MCF 10A (cell line): ENCODE measurements at regions of chr9 and their contacts with region 1.

Region 1: DNA sequence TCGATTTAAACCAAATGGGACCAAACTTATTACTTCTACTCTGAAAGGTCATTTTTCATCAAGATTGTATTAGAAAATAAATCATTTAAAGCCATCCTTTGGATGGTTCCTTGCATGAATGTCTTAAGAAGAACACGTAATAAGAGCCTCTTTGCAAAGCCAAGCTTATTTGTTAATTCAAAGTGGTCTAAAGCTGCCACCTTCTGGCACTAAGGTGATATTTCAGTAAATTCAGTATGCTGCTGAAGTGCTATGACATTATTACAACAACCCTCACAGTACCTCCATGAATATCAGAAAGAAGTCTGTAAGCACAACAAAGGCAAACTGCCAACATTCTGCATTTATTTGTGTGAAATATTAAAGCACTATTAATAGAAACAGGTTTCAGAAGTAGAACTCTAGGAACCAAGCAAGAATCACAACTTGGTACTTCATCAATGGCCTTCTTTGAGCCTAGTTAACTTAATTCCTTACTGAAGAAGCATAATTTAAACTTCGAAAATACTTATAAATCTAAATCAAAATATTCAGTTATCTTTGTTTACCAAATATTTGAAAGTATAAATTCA is 53.1 kb upstream of the TYRP1 start:
- DNase-seq: peak; percentile 56
- H3K4me3 Mint-ChIP-seq: no peak overlapping the region
- H3K27ac Mint-ChIP-seq: no peak overlapping the region
- H3K4me1 Mint-ChIP-seq: no peaks in the 10 kb centered on the region
- H3K27me3 Mint-ChIP-seq: peaks cover 78% of the 10 kb centered on the region
- CTCF ChIP-seq: peak; percentile 77

Region 2: DNA sequence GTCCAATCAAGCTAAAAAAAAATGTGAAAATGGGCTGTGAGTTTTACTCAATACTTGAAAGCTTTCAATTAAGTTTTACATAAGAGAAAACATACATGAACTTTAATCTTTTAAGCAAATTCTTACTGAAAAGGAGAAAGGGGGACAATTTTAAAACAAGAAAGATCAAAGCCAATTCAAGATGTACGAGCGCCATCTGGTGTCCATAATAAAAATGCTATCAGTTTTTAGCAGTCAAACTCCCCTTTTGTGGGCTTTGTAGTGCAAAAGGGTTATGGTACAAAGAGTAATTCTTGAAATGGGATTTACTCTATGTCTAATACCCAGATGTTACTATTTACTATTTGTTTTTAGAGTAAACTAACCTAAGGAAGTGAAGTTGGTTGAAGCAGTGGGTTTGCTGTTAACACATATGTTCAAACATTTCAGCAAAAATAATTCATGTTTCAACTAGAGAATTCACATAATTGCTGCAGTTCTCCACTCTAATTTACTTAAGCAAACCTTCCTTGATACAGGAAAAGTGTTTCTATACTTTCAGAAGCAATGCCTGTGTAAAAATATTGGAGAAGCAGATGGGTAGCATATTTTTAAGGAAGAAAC is 175.1 kb before region 1 on chr9:
- CTCF ChIA-PET with region 1: interaction called, 3 read pairs
- POLR2A ChIA-PET with region 1: no interaction called
- intact Hi-C with region 1: loop called (anchors 5 kb)
- DNase-seq: peak; percentile 38
- H3K4me3 Mint-ChIP-seq: no peak overlapping the region
- H3K27ac Mint-ChIP-seq: no peak overlapping the region
- H3K4me1 Mint-ChIP-seq: no peaks in the 10 kb centered on the region
- H3K27me3 Mint-ChIP-seq: peaks cover 83% of the 10 kb centered on the region
- CTCF ChIP-seq: peak; percentile 57

Region 3: DNA sequence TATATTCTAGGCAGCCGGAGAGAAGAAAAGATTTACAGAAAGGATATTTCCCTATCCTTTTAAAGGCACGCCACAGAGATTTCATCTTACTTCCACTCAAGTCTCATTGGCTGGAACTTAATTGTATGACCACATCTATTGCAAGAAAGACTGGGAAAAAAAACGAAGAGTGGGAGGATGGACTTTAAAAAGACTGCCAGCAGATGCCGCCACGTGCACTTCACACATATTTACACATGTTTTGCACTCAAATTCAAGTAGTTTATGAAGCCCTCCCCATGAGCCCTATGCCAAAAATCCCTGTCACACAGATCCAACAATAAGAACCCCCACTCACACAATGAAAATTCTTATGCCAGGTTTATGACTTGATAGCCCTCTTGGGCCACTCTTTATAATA is 85.5 kb before region 1 on chr9:
- CTCF ChIA-PET with region 1: interaction called, 5 read pairs
- POLR2A ChIA-PET with region 1: no interaction called
- intact Hi-C with region 1: loop called (anchors 2 kb)
- DNase-seq: peak; percentile 20
- H3K4me3 Mint-ChIP-seq: no peak overlapping the region
- H3K27ac Mint-ChIP-seq: no peak overlapping the region
- H3K4me1 Mint-ChIP-seq: no peaks in the 10 kb centered on the region
- H3K27me3 Mint-ChIP-seq: peaks cover 48% of the 10 kb centered on the region
- CTCF ChIP-seq: peak; percentile 27

Region 4: GRCh38 chr9:12666813-12667212 is 26.7 kb after region 1 on chr9:
- CTCF ChIA-PET with region 1: no interaction called
- POLR2A ChIA-PET with region 1: no interaction called
- intact Hi-C with region 1: no loop called
- DNase-seq: peak; percentile 9
- H3K4me3 Mint-ChIP-seq: no peak overlapping the region
- H3K27ac Mint-ChIP-seq: no peak overlapping the region
- H3K4me1 Mint-ChIP-seq: no peaks in the 10 kb centered on the region
- H3K27me3 Mint-ChIP-seq: peaks cover 45% of the 10 kb centered on the region
- CTCF ChIP-seq: peak; percentile 13